HCT116 (cell line): ENCODE measurements at regions of chr19 and their contacts with region 1.

Region 1: GRCh38 chr19:38387550-38388348 is at the start of gene GGN:
- DNase-seq: peak; percentile 88
- ATAC-seq: peak; percentile 82
- H3K4me3 ChIP-seq: peak within 1 kb of the TSS; percentile 64 to 68
- H3K27ac ChIP-seq: peak within 1 kb of the TSS; percentile 63
- H3K4me1 ChIP-seq: peaks cover 11 to 47% of the 10 kb centered on the region in 2 experiments
- H3K27me3 ChIP-seq: no peaks in the 10 kb centered on the region
- CTCF ChIP-seq: no peak
- POLR2A ChIP-seq: no peak
- RAD21 ChIP-seq: no peak
- total RNA-seq, gene GGN: 0.47 TPM

Region 2: DNA sequence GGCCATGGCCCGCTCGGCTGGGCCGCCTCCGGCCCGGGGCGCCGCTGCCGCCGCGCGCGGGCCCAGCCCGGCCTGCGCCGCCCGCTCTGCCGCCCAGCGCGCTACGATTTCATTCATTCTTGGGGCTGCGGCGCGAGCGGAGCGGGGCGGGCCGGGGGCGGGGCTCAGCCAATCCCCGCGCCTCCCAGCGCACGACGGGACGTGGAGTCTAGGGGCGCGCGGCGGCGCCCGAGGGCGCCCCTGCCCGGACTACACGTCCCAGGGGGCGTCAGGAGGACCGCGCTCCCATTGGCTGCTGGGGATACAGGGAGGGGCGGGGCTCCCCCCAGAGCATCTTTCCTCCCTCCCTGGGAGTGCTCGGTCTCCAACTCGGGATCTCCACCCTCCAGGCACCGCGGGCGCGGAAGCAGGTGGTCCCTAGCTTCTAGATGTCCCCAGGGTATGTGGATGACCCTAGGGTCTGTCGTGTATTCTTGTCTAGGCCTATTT is 158.1 kb before region 1 on chr19:
- CTCF ChIA-PET with region 1: interaction called, 13 read pairs
- POLR2A ChIA-PET with region 1: no interaction called
- RAD21 ChIA-PET with region 1: no interaction called
- intact Hi-C with region 1: no loop called
- DNase-seq: peak; percentile 85
- ATAC-seq: peak; percentile 91
- H3K4me3 ChIP-seq: peak overlapping the region; percentile 54 to 61; a peak in 2 of 4 replicates
- H3K27ac ChIP-seq: no peak overlapping the region
- H3K4me1 ChIP-seq: peaks cover 10 to 33% of the 10 kb centered on the region in 2 experiments; a peak in 3 of 4 replicates
- H3K27me3 ChIP-seq: no peaks in the 10 kb centered on the region
- CTCF ChIP-seq: no peak
- POLR2A ChIP-seq: no peak
- RAD21 ChIP-seq: no peak

Region 3: DNA sequence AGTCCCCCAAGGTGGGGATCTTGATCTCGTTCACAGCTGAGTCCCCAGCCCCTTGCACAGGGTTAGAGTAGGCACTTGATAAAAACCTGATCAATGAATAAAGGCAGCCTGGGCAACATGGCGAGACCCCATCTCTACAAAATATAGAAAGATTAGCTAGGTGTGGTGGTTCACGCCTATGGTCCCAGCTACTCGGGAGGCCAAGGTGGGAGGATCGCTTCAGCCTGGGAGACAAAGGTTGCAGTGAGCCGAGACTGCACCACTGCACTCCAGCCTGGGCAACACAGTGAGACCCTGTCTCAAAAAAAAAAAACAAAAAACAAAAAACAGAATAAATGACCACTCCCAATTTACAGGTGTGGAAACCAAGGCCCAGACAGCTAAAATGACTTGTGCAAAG is 76.8 kb before region 1 on chr19:
- CTCF ChIA-PET with region 1: no interaction called
- POLR2A ChIA-PET with region 1: no interaction called
- RAD21 ChIA-PET with region 1: no interaction called
- intact Hi-C with region 1: no loop called
- DNase-seq: no peak
- ATAC-seq: no peak
- H3K4me3 ChIP-seq: no peak overlapping the region
- H3K27ac ChIP-seq: no peak overlapping the region
- H3K4me1 ChIP-seq: peaks cover 4 to 12% of the 10 kb centered on the region in 2 experiments; a peak in 3 of 4 replicates
- H3K27me3 ChIP-seq: no peaks in the 10 kb centered on the region
- CTCF ChIP-seq: no peak
- POLR2A ChIP-seq: no peak
- RAD21 ChIP-seq: no peak

Region 4: DNA sequence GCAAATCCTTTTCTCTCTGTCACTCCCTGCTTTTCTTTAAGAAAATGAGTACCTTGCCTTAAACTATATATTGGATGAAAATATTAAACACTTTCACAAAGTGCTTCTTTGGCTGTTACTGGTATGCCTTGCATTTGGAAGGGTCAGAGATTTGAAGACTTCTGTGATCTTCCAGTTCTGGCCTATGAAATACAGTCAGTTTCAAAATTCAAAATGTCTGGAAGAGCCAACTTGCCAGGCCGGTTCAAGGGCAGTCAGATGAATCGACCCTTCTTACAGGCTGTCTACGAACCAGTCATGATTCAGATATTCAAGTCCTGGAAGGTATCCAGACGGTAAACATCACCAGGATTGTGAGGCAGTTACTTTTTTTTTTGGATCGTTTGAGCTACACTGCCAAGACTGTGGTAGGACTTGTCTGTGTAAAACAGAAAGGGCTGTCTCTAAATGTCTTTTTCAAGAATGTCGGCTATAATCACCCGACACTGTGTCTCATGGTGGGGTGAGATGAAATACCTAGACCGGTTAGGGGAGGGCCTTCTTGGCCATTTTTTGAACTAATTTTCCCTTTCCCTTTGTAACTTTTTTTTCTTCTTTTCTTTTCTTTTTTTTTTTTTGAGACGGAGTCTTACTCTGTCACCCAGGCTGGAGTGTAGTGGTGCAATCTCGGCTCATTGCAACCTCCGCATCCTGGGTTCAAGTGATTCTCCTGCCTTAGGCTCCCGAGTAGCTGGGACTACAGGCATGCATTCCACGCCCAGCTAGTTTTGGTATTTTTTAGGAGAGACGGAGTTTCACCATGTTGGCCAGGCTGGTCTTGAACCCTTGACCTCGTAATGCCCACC is 270.9 kb after region 1 on chr19:
- CTCF ChIA-PET with region 1: no interaction called
- POLR2A ChIA-PET with region 1: no interaction called
- RAD21 ChIA-PET with region 1: no interaction called
- intact Hi-C with region 1: no loop called
- DNase-seq: peak; percentile 83
- ATAC-seq: peak; percentile 70
- H3K4me3 ChIP-seq: peak overlapping the region; percentile 19 to 37; a peak in 3 of 4 replicates
- H3K27ac ChIP-seq: peak overlapping the region; percentile 72
- H3K4me1 ChIP-seq: peaks cover 93 to 95% of the 10 kb centered on the region in 2 experiments
- H3K27me3 ChIP-seq: no peaks in the 10 kb centered on the region
- CTCF ChIP-seq: no peak
- POLR2A ChIP-seq: no peak
- RAD21 ChIP-seq: no peak